Mammary epithelial cell (primary cell): ENCODE measurements at regions of chr16 and their contacts with region 1.

Region 1: DNA sequence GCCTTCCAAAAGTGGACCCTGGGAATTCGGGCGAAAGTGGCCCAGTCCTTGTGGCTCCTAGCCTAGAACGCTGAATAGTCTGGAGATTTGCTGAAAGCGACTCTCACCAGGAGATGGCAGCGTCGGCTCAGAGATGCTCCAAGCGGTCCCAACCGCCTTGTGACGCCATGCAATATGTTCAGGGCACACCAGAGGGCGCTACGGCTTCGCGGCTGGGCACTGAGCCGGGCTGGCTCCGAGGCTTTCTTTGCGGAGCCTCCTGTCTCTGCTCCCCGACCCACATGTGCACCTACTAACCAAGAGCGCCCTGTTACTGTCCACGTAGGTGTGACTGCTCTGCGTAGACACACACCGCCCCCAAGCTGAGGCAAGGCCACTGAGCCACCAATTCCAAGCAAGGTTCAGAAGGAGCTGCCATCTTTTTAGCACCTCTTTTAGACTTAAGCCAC is 36.9 kb downstream of the SYCE1L start:
- DNase-seq: peak; percentile 59
- H3K4me3 ChIP-seq: no peak overlapping the region
- H3K27ac ChIP-seq: no peak overlapping the region
- H3K4me1 ChIP-seq: no peaks in the 10 kb centered on the region
- H3K27me3 ChIP-seq: no peaks in the 10 kb centered on the region
- CTCF ChIP-seq: peak; percentile 99 to 100

Region 2: GRCh38 chr16:77271532-77272426 is 35.7 kb after region 1 on chr16:
- CTCF ChIA-PET with region 1: no interaction called
- dilution Hi-C with region 1: no loop called
- in situ Hi-C with region 1: no loop called
- intact Hi-C with region 1: no loop called
- DNase-seq: no peak
- H3K4me3 ChIP-seq: no peak overlapping the region
- H3K27ac ChIP-seq: no peak overlapping the region
- H3K4me1 ChIP-seq: no peaks in the 10 kb centered on the region
- H3K27me3 ChIP-seq: no peaks in the 10 kb centered on the region
- CTCF ChIP-seq: no peak

Region 3: DNA sequence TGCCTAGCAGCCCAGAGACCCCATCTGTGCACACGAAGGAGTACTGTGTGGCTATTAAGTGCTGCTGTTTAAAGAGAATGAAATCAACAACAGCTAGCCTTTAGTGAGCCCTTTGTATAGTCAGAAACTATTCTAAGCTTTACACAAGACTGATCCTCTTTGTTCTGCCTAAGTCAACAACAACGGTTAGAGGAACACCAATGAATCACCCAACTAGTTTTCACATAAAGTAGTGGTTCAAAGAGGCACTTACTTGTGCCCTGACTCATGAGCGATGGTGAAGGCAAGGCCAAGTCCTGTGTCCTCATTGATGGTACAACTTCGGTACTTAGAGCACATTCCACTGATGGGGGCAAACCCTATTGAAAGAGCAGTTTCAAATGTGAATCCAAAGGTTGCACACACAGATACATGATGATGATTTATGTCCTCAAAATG is 123.0 kb after region 1 on chr16:
- CTCF ChIA-PET with region 1: no interaction called
- dilution Hi-C with region 1: no loop called
- in situ Hi-C with region 1: no loop called
- intact Hi-C with region 1: loop called (anchors 5 kb)
- DNase-seq: peak; percentile 89
- H3K4me3 ChIP-seq: no peak overlapping the region
- H3K27ac ChIP-seq: no peak overlapping the region
- H3K4me1 ChIP-seq: peaks cover 6% of the 10 kb centered on the region
- H3K27me3 ChIP-seq: no peaks in the 10 kb centered on the region
- CTCF ChIP-seq: no peak

Region 4: GRCh38 chr16:77437859-77438258 is 201.8 kb after region 1 on chr16:
- CTCF ChIA-PET with region 1: no interaction called
- dilution Hi-C with region 1: no loop called
- in situ Hi-C with region 1: no loop called
- intact Hi-C with region 1: loop called (anchors 5 kb)
- DNase-seq: no peak
- H3K4me3 ChIP-seq: no peak overlapping the region
- H3K27ac ChIP-seq: no peak overlapping the region
- H3K4me1 ChIP-seq: no peaks in the 10 kb centered on the region
- H3K27me3 ChIP-seq: peaks cover 5% of the 10 kb centered on the region
- CTCF ChIP-seq: no peak

Region 5: GRCh38 chr16:77660311-77660710 is 424.2 kb after region 1 on chr16:
- CTCF ChIA-PET with region 1: no interaction called
- dilution Hi-C with region 1: no loop called
- in situ Hi-C with region 1: loop called (anchors 10 kb)
- intact Hi-C with region 1: loop called (anchors 1 kb)
- DNase-seq: peak; percentile 33
- H3K4me3 ChIP-seq: no peak overlapping the region
- H3K27ac ChIP-seq: no peak overlapping the region
- H3K4me1 ChIP-seq: no peaks in the 10 kb centered on the region
- H3K27me3 ChIP-seq: no peaks in the 10 kb centered on the region
- CTCF ChIP-seq: peak; percentile 42 to 75

Region 6: DNA sequence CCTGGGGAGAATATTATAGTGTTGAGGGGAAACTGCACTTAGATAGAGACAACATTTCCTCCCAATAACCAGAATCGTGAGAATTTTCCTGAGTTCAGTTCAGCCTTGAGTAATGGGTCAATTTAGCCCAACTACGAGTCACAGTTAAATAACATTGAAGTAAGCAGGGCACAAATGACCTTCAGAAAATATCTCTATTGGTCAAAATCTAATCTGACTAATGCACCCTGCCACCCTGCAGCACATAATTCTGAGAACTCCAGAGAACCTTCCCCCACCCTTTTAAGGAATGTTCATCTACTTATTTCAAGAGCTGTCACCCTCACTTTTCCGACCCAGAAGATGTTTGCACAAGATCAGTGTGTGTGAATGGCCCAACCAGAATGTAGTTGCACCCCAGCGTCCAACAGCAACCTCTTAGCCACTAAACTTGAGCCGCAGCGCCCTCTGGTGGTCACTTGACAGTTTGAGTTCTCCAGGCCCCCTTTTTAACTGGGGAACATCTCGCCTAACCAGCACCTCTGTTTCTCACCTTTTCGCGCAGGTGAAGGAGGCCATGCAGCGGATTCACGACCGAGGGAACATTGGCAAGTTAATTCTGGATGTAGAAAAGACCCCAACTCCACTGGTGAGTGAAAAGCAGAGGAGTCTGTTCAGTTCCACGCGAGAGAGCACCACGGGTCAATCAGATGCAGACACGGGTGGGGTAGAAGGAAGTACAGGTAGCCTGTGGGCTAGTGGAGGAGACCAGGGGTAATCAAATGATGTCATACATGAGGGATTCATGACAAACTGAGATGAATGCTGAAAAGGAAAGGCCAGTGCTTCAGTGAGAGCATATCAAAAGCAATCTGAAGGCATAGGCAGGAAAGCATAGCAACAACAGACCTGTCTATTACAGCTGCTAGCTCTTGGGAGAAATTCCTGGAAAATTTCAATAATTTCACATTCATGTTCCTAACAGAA is 735.5 kb after region 1 on chr16:
- CTCF ChIA-PET with region 1: no interaction called
- dilution Hi-C with region 1: no loop called
- in situ Hi-C with region 1: loop called (anchors 10 to 25 kb)
- intact Hi-C with region 1: loop called (anchors 5 kb)
- DNase-seq: peak; percentile 42
- H3K4me3 ChIP-seq: no peak overlapping the region
- H3K27ac ChIP-seq: no peak overlapping the region
- H3K4me1 ChIP-seq: no peaks in the 10 kb centered on the region
- H3K27me3 ChIP-seq: no peaks in the 10 kb centered on the region
- CTCF ChIP-seq: peak; percentile 70 to 77

Region 7: GRCh38 chr16:78002915-78003538 is 766.9 kb after region 1 on chr16:
- CTCF ChIA-PET with region 1: no interaction called
- dilution Hi-C with region 1: no loop called
- in situ Hi-C with region 1: loop called in 1 of 2 experiments (anchors 25 kb)
- intact Hi-C with region 1: loop called (anchors 1 kb)
- DNase-seq: peak; percentile 73
- H3K4me3 ChIP-seq: no peak overlapping the region
- H3K27ac ChIP-seq: no peak overlapping the region
- H3K4me1 ChIP-seq: no peaks in the 10 kb centered on the region
- H3K27me3 ChIP-seq: no peaks in the 10 kb centered on the region
- CTCF ChIP-seq: peak; percentile 79 to 83